Ascending aorta (tissue), 2 donors: ENCODE measurements at regions of chr22 and their contacts with region 1.

Region 1: GRCh38 chr22:28009272-28009827 is 90.3 kb upstream of the PITPNB start:
- DNase-seq: peak in 1 of 2 donors; percentile 85
- H3K4me3 ChIP-seq: no peak overlapping the region
- H3K27ac ChIP-seq: no peak overlapping the region
- H3K4me1 ChIP-seq: peaks cover 0 to 7% of the 10 kb centered on the region in 2 donors
- H3K27me3 ChIP-seq: no peaks in the 10 kb centered on the region
- CTCF ChIP-seq: peak; percentile 92 to 98 (median 96)

Region 2: GRCh38 chr22:26679003-26679629 is 1330.2 kb before region 1 on chr22:
- intact Hi-C with region 1: loop called (anchors 5 kb)
- DNase-seq: peak in 1 of 2 donors; percentile 89
- H3K4me3 ChIP-seq: no peak overlapping the region
- H3K27ac ChIP-seq: no peak overlapping the region
- H3K4me1 ChIP-seq: peaks cover 5 to 15% of the 10 kb centered on the region in 2 donors
- H3K27me3 ChIP-seq: no peaks in the 10 kb centered on the region
- CTCF ChIP-seq: peak; percentile 78 to 98 (median 95)

Region 3: DNA sequence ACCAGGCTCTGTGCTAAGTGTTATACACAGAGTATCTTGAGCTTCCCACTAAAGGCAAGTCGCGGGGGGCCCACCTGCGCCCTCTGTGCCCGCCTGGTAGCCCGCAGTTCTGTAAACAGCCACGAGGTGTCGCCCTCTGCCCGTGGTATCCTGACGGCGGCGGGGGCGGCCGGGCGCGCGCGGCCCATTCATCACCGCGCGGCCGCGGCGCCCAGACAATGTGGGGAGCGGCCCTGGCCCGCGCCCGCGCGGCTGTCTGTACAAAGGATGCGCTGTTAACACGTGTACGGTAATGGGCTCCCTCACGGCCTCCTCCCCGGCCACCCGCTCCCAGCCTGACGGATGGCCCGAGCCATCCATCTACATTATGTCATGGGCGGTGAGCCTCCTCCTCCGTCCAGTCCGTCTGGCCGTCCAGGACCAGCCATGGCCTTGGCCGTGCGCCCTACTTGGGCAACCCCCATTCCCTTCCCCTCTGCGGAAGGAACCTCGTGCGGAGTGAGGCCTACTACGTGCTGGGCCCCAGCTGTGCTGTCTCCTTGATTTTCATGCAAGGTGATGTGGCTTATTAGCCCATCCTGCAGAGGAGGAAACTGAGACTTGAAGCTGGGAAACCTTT is 1252.6 kb before region 1 on chr22:
- intact Hi-C with region 1: loop called (anchors 5 kb)
- DNase-seq: peak in 1 of 2 donors; percentile 78
- H3K4me3 ChIP-seq: peak overlapping the region; percentile 51 to 52
- H3K27ac ChIP-seq: no peak overlapping the region
- H3K4me1 ChIP-seq: no peaks in the 10 kb centered on the region
- H3K27me3 ChIP-seq: no peaks in the 10 kb centered on the region
- CTCF ChIP-seq: peak; percentile 87 to 97 (median 93)

Region 4: DNA sequence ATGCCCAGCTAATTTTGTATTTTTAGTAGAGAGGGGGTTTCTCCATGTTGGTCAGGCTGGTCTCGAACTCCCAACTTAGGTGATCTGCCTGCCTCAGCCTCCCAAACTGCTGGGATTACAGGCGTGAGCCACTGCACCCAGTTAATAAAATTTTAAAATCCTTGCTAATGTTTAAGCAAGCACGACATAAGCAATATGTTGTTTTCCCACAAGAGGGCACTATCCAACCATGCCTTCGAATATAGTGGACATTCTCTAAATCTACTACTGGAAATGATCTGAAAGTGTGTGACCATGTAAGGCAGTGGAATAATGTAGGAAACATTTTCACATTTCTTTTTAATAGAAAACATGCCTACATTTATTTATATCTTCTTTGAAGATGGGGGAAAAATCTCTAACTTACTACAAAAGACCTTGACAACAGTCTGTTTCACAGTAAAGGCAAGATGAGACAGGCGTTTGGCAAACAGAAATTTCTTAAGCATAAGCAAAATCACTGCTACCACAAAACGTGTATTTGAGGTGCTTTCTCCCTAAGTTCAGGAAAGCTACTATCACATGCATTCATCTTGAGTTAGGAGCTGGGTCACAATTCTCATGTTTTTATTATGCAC is 128.5 kb before region 1 on chr22:
- intact Hi-C with region 1: loop called (anchors 1 kb)
- DNase-seq: peak in 1 of 2 donors; percentile 76
- H3K4me3 ChIP-seq: peak overlapping the region in 1 of 2 donors; percentile 8
- H3K27ac ChIP-seq: peak overlapping the region; percentile 76 to 85
- H3K4me1 ChIP-seq: peaks cover 11 to 51% of the 10 kb centered on the region in 2 donors
- H3K27me3 ChIP-seq: no peaks in the 10 kb centered on the region
- CTCF ChIP-seq: peak; percentile 76 to 84 (median 83)

Region 5: DNA sequence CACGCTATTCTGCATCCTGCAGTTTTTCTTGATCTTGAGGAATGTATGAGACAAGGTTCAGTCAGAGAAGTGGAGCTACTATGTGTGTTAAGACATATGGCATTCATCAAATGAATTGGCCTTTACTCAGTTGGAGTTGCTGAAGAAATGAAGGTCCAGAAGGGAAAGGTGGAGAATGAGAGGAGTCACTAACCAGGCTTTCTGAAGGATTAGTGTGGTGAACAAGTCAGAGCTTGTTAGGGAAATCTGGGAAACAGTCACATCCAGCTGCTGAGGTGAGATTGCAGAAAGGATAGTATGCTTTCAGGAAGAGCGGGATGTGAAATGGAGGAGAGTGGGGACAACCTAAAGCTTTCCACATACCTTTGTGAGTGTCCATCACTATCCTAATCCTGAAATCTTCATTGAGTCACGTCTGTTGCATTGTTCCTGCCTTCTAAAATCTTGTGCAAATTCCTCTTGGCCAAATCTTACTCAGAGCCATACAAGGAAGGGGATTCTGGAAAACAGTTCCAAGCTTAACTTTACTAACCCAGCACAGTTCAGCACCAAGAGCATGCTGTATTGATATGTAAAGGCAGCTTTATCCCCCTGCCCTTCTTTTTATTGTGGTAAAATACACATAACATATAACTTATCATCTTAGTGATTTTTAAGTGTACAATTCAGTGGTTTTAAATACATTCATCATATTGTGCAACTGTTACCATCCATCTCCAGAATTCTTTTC is 78.9 kb before region 1 on chr22:
- intact Hi-C with region 1: no loop called
- DNase-seq: no peak
- H3K4me3 ChIP-seq: no peak overlapping the region
- H3K27ac ChIP-seq: no peak overlapping the region
- H3K4me1 ChIP-seq: no peaks in the 10 kb centered on the region
- H3K27me3 ChIP-seq: no peaks in the 10 kb centered on the region
- CTCF ChIP-seq: no peak

Region 6: DNA sequence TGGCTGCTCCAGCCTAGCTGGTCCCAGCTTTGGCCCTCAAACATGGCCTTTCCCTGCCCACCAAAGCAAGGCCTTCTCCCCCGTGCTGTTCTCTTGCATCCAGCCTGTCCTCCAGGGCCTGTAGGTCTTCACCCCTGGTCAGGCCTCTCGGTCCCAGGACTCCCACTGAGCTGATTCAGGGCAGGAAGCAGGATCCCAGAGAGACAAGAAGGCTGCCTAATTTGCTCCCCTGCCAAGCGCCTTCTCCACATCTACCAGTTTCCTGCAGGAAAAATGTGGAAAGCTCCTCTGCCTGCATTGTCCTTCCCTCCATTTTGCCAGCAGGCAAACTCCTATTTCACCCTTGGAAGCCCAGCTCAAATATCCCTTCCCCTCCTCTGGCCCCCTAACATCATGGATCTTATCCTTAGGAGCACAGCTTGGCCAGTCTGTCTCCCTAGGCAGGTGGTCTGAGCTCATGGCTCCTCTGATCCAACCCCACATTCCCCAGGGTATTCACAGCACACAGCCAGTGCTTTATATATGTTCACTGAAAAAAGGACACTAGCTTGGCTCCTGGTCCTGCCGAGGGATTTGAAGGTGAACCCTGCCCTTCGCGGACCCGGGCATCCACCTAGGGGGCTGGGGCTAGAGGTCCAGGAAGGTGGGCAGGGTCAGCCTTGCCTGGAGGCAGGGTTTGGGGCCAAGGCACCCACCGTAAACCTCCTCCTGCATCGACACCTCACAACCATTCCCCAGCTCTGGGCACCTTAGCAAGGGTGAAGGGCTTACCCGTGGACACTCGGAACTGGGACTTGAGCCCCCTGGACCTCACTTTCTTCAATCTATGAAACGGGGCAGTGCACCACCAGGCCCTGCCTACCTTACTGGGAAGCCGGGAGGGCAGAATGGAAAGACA is 1257.5 kb after region 1 on chr22:
- intact Hi-C with region 1: no loop called
- DNase-seq: no peak
- H3K4me3 ChIP-seq: peak overlapping the region; percentile 76 to 98
- H3K27ac ChIP-seq: peak overlapping the region; percentile 96 to 99
- H3K4me1 ChIP-seq: peaks cover 6 to 35% of the 10 kb centered on the region in 2 donors
- H3K27me3 ChIP-seq: no peaks in the 10 kb centered on the region
- CTCF ChIP-seq: no peak